ENCODE measurements at regions of chr17 and their contacts with region 1.

Region 1: GRCh38 chr17:81484195-81484979 is 28.2 kb downstream of the ACTG1 start:
- DNase-seq: peak; percentile 83 to 90 (median 89)
- H3K4me3 ChIP-seq: peak overlapping the region in 2 of 4 donors; percentile 15 to 44
- H3K27ac ChIP-seq: no peak overlapping the region
- H3K4me1 ChIP-seq: peaks cover 26 to 54% of the 10 kb centered on the region in 2 donors
- H3K27me3 ChIP-seq: no peaks in the 10 kb centered on the region
- CTCF ChIP-seq: peak; percentile 56 to 100 (median 84)
- POLR2A ChIP-seq: peak in 1 of 2 donors; percentile 34

Region 2: DNA sequence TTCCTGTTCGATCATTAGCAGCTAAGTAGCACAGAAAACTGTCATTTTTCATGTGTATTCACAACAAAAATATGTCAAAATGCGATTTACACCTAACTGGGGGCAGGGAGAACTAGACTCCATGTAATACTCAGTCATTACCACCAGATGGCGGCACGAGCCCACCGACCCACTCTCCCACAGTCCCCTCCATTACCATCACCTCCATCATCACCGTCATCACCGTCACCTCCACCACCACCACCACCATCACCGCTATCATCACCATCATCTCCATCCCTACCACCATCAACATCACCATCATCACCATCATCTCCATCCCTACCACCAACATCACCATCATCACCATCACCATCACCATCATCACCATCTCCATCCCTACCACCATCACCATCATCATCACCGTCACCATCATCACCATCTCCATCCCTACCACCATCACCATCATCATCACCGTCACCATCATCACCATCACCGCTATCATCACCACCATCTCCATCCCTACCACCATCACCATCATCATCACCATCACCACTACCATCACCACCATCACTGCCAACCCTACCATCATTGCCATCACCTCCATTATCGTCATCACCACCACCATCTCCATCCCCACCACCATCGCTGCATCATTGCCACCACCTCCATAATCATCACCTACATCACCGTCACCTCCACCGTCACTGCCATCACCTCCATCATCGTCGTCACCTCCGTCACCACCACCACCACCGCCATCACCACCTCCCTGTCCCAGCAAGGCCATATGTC is 230.8 kb before region 1 on chr17:
- intact Hi-C with region 1: loop called (anchors 5 kb)
- DNase-seq: peak in 3 of 7 donors; percentile 52 to 81 (median 55)
- H3K4me3 ChIP-seq: no peak overlapping the region
- H3K27ac ChIP-seq: peak overlapping the region in 1 of 5 donors; percentile 59
- H3K4me1 ChIP-seq: peaks cover 0 to 15% of the 10 kb centered on the region in 2 donors
- H3K27me3 ChIP-seq: no peaks in the 10 kb centered on the region
- CTCF ChIP-seq: peak; percentile 65 to 97 (median 84)
- POLR2A ChIP-seq: no peak

Region 3: DNA sequence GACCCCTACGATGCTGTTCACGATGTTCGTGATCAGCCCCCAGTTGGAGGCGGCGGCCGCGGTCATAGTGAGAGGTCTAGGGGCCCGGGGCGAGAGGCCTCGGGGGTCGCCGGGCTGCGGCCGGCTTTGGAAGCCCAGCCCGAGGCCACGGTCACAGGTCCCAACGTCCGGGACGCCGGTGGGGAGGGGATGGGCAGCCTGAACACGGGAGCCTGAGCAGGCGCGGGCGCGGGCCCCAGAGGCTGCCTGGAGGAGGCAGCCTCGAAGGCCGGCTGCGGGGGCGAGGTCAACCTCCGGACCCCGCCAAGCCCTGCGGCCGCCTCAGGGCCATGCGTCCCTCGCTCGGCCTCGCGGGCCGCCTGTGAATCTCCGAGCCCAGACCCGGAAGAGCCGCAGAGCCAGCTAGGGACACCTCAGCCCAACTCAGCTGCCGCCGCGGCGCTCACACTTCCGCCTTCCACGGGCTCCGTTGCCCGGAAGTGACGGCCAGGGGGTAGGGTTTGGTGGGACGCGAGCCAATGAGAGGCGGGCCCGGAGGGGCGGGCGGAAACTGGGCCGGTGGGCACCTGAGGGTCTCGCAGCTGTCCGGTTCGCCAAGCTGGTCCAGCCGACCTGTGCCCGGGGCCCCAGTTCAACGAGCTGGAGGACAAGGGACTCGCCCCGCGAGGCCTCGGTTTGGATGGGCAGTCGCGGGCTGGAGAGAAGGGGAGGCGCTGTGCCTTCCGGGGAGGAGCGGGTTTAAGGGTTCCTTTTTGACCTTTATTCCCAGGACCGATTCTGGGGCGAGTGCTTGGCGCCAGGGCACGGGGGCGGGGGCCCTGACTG is 189.3 kb before region 1 on chr17 and contains the start of gene SLC38A10:
- intact Hi-C with region 1: loop called in 1 of 2 experiments (anchors 5 kb)
- DNase-seq: peak; percentile 89 to 93 (median 91)
- H3K4me3 ChIP-seq: peak within 1 kb of the TSS; percentile 43 to 94 (median 85)
- H3K27ac ChIP-seq: peak within 1 kb of the TSS; percentile 22 to 98 (median 86)
- H3K4me1 ChIP-seq: peaks cover 5 to 40% of the 10 kb centered on the region in 2 donors
- H3K27me3 ChIP-seq: no peaks in the 10 kb centered on the region
- CTCF ChIP-seq: no peak
- POLR2A ChIP-seq: peak; percentile 80 to 88
- total RNA-seq, gene SLC38A10: 22.5 to 163 (median 102) TPM

Region 4: DNA sequence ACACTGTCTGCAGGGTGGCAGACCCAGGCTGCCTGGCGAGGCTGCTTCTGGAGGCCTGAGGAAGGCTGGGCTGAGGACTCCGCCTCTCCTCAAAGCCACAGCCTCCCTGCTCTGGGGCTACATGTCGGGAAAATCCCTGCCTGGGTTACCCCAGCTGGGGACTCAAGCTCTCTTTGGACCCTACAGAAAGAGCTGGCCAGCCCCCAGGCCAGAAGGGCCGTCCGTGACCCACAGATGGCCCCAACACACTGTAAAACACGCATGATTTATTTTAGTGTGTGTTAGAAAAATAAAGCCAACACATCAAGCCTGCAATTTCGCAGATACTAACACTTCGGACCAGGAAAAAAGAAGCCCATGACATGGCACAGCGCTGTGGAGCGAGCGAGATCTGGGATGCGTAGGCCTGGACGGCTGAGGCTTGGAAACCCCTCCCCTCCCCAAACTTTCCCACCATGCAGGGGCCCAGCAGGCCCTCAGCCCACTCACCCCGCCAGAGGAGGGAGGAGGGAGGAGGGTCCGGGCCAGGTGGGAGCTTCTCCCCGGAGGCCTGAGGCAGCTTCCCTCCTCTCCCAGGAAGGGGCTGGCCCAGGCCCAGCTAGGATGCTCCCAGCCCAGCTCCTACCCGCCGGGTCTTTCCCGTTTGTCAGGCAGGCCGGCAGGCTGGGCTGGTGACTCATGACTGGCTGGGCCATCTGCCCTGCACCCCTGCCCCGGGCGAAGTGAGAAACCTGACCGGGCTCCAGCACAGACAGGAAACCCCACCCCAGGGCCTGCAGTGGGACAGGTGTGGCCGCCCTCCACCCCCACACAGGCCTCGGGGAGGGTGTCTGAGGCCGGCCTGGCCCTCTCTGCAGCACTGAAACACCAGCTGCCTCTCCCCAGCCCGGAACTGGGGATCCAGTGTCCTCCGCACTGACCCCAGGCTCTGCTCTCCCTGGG is 155.1 kb before region 1 on chr17:
- intact Hi-C with region 1: no loop called
- DNase-seq: peak; percentile 84 to 94 (median 92)
- H3K4me3 ChIP-seq: no peak overlapping the region
- H3K27ac ChIP-seq: peak overlapping the region in 2 of 5 donors; percentile 60 to 64
- H3K4me1 ChIP-seq: peaks cover 7 to 35% of the 10 kb centered on the region in 2 donors
- H3K27me3 ChIP-seq: no peaks in the 10 kb centered on the region
- CTCF ChIP-seq: no peak
- POLR2A ChIP-seq: no peak

Region 5: DNA sequence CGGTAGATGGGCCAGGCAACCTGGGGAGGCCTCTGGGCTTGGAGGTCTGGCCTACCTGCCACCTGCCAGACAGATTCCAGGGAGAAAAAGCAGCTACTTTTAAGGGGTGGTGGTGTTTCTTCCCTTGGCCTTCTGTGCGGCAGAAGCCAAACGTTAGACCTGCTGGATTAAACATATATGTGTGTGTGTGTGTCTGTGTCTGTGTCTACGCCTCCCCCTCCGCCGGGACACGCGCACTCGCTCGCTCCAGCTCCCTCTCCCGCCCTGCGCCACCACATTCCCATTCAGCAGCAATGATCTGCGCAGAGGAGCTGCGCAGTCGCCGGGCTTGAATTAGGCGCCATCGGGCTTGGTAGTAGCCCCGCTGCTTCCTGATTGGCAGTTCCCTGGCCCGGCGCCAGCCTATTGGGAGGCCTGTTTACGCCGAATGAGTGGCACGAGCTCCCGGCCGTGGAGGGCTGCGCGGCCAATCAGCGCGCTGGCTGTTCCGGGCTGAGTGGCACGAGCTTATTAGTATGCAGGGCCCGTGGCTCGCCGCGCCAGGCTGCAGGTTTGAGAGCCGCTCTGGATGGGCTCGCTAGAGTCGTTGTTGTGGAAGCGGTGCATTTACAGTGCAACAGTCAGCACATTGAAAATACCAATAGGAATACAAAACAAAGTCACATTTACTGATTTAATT is 89.3 kb before region 1 on chr17 and contains the start of gene BAHCC1:
- intact Hi-C with region 1: loop called in 1 of 2 experiments (anchors 10 kb)
- DNase-seq: peak; percentile 100
- H3K4me3 ChIP-seq: peak within 1 kb of the TSS in 2 of 4 donors; percentile 61 to 96
- H3K27ac ChIP-seq: peak within 1 kb of the TSS; percentile 48 to 96 (median 92)
- H3K4me1 ChIP-seq: peaks cover 24 to 27% of the 10 kb centered on the region in 2 donors
- H3K27me3 ChIP-seq: no peaks in the 10 kb centered on the region
- CTCF ChIP-seq: peak in 1 of 6 experiments; percentile 2
- POLR2A ChIP-seq: peak; percentile 88 to 97
- total RNA-seq, gene BAHCC1: 1.7 to 35.3 (median 18.5) TPM

Measured in adrenal gland (tissue), 19 donors.